AG04449 (cell line): ENCODE measurements at regions of chr1 and their contacts with region 1.

Region 1: DNA sequence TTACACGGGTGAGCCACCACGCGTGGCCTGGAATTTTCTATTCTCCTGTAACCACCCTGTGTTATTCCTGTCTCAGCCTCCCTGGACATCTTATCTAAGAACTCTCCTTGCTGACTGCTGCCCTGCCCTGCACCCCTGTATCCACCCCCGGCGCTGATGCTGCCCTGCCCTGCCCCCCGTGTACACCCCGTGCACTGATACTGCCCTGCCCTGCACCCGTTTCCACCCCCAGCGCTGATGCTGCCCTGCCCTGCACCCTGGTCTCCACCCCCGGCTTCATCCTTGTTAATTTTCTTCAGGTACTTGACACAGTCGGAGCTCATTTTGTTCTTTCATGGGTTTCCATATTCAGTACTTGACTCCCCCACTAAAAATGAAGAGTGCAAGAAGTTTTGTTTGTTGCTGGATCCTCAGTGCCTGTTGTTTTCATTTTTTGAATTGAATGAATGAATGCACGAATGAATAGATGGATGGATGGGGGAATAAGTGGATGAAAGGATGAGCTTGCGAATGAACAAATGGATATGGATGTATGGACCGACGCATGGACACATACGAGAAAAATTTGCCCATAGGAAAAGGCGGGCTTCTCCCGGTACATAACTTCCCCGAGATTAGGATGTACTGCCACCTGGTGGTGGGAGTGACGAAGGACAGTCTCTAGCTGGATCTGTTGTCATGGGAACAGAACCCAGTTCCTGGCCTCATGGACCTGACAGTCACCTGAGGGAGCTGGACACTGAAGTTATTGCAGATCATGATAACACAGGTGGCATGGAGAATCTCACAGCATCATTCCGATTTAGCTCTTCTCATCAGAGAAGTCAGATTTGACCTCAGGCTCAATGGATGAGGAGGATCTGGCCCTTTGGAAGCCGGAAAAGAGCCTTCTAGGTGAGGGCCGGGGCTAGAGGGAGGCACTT is 14.9 kb downstream of the AADACL4 start:
- DNase-seq: no peak
- H3K4me3 ChIP-seq: no peak overlapping the region
- CTCF ChIP-seq: peak; percentile 75

Region 2: DNA sequence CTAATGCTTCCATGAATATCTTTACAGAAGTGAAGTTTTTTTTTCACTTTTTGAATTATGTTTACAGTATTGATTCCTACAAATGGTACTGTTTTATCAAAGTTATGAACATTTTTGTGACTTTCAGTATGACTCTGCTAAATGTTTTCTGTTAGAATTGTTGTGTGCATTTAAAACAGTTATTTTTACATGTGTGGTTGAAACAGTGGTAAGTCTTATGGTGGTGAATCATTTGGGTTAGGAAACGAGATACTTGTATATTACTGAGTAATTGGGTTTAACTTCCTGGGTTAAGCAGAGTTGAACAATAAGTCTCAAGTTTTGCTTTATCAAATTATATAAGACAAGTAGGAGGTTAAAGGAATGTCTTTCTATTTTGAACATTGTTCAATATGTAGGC is 362.2 kb before region 1 on chr1:
- CTCF ChIA-PET with region 1: interaction called, 39 read pairs
- POLR2A ChIA-PET with region 1: no interaction called
- DNase-seq: peak; percentile 56
- H3K4me3 ChIP-seq: no peak overlapping the region
- CTCF ChIP-seq: no peak

Region 3: DNA sequence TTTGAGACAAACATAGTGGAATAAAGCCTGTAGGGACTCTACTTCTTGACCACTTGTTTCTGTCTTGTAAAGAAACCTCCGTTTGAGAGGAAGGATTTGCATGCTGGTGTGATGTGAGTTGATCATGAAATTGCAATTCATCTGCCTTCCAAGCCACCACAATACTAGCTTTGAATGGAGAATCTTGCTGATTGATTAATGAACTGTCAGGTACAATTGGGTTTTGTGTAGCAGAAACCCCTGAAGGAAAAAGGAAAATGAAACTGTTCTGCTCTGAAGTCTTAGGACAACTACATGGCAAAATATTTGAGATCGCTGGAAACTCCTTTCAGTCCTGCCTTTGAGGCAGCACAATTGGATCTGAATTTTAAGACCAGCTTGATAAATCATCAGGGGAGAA is 338.3 kb before region 1 on chr1:
- CTCF ChIA-PET with region 1: interaction called, 209 read pairs
- POLR2A ChIA-PET with region 1: no interaction called
- DNase-seq: no peak
- H3K4me3 ChIP-seq: no peak overlapping the region
- CTCF ChIP-seq: no peak

Region 4: GRCh38 chr1:12383786-12384185 is 275.0 kb before region 1 on chr1:
- CTCF ChIA-PET with region 1: interaction called, 14 read pairs
- POLR2A ChIA-PET with region 1: no interaction called
- DNase-seq: peak; percentile 47
- H3K4me3 ChIP-seq: no peak overlapping the region
- CTCF ChIP-seq: no peak

Region 5: GRCh38 chr1:12511516-12512468 is 147.0 kb before region 1 on chr1:
- CTCF ChIA-PET with region 1: no interaction called
- POLR2A ChIA-PET with region 1: no interaction called
- DNase-seq: no peak
- H3K4me3 ChIP-seq: no peak overlapping the region
- CTCF ChIP-seq: no peak

Region 6: GRCh38 chr1:12640237-12640957 is 18.4 kb before region 1 on chr1:
- CTCF ChIA-PET with region 1: interaction called, 16 read pairs
- POLR2A ChIA-PET with region 1: no interaction called
- DNase-seq: no peak
- H3K4me3 ChIP-seq: no peak overlapping the region
- CTCF ChIP-seq: no peak